GM10248 (cell line): ENCODE measurements at regions of chr10 and their contacts with region 1.

Region 1: DNA sequence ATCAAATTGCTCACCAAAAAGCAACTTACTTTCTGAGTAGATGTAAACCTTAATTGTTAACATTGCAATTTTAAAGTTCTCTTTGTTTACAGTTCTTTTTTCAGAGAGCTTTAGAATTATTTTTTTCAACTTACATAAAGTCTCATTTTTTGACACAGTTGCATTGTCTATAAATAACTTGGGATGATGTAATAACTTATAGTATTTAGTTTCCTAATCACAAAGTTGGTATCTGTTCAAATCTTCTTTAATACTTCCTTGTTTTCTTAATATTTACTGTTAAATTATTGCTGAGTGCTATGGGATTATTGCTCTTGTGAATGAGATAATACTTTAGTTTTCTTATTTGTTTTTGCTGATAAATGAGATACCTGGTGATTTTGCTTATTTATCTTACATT is 18.9 kb upstream of the SUV39H2 start:
- DNase-seq: no peak
- CTCF ChIP-seq: no peak

Region 2: GRCh38 chr10:14812271-14812670 is 47.5 kb before region 1 on chr10:
- CTCF ChIA-PET with region 1: no interaction called
- POLR2A ChIA-PET with region 1: no interaction called
- DNase-seq: no peak
- CTCF ChIP-seq: no peak

Region 3: DNA sequence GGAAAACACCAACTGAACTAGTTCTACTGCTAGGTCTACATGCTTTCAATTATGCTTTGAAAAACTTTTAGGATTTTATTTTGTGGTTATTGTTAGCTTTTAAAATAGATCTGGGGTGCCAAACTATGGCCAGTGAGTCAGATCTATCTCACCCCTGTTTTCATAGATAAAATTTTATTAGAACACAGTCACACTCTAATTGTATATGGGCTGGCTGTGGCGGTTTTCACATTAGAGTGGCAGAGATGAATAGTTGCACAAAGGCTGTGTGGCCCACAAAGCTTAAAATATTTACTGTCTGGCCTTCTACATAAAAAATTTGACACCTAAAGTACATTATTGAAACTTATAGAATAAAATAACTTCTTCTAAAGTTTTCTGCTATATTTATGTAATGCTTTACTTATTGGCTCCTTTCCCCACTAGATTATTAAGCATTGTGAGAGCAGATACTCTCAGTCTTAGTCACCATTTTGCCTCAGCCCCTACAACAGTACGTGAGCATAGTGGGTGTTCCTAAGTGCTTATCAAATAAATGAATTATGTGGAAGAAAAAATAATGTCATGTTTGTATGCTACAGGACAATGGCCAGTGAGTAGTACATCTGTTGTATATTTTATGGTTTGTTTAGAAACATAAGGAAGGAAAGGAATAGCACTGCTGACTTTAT is 13.4 kb after region 1 on chr10:
- CTCF ChIA-PET with region 1: interaction called, 11 read pairs
- POLR2A ChIA-PET with region 1: no interaction called
- DNase-seq: no peak
- CTCF ChIP-seq: no peak

Region 4: DNA sequence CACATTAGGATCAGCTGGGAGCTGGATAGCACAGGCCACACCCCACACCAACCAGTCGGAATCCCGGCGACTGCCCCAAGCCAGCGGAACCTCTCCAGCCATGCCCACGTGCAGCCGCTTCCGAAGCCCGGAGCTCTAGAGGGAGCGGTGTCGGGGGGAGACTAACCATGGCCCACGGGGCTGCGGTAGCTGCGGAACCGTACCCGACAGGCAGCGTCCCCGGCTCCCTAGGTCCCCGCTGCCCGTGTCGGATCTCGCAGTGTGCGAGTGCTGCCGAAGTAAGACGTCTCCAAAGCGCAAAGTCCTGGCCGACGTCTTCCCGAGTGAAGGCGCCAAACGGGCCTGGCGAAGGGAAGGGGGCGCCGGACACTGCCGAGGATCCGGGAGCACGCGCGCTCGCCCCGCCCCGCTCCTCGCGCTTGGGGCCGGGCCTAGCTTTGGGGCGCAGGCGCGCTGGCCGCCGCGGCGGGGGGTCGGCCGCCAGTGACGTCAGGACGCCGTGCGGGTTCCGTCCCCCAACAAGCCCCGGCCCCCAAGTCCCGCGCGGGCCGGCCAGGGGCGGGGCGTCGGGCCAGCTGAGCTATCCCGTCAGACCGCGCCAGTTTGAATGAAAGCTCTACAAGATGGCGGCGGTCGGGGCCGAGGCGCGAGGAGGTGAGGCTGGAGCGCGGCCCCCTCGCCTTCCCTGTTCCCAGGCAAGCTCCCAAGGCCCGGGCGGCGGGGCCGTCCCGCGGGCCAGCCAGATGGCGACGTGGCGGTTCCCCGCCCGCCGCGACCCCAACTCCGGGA is 18.7 kb after region 1 on chr10 and contains the start of gene SUV39H2:
- CTCF ChIA-PET with region 1: interaction called, 11 read pairs
- POLR2A ChIA-PET with region 1: no interaction called
- DNase-seq: peak; percentile 100
- CTCF ChIP-seq: peak; percentile 12